ENCODE measurements at regions of chr18 and their contacts with region 1.

Region 1: DNA sequence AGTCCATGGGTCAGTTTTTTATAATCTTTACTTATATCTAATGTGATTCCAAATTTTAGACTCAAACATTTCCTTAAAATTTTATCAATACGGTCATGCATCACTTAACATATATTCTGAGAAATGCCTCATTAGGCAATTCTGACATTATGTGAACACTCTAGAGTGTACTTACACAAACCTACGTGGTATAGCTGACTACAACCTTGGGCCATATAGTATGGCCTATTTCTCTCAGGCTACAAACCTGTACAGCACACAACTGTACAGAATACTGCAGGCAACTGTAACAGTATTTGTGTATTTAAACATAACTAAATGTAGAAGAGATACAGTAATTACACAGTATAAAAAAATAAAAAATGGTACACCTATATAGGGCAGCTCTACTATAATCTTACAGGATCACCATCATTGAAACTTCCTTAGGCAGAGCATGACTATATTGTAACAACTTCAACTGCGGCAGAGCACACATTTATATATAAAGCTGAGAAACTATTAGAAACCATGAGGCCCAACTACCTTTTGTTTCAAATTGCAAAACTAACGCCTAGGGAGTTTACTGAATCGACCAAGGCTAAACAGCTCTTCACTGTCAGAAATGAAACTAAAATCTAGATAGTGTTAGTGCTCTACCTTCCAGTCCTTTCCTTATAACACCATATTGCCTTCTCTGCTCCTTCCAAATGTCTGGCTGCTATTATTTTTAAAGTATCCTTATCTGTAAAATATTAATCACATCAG is 6.9 kb downstream of the YES1 start:
- DNase-seq: peak in 2 of 9 experiments; percentile 11 to 30
- ATAC-seq: no peak
- H3K4me3 ChIP-seq: peak overlapping the region; percentile 8 to 9
- H3K4me3 Mint-ChIP-seq: peak overlapping the region; percentile 76
- H3K27ac ChIP-seq: peak overlapping the region in 1 of 2 experiments; percentile 34
- H3K27ac Mint-ChIP-seq: peak overlapping the region; percentile 45
- H3K4me1 ChIP-seq: peaks cover 58% of the 10 kb centered on the region
- H3K4me1 Mint-ChIP-seq: peaks cover 72% of the 10 kb centered on the region
- H3K27me3 ChIP-seq: no peaks in the 10 kb centered on the region
- H3K27me3 Mint-ChIP-seq: no peaks in the 10 kb centered on the region
- CTCF ChIP-seq: no peak

Region 2: DNA sequence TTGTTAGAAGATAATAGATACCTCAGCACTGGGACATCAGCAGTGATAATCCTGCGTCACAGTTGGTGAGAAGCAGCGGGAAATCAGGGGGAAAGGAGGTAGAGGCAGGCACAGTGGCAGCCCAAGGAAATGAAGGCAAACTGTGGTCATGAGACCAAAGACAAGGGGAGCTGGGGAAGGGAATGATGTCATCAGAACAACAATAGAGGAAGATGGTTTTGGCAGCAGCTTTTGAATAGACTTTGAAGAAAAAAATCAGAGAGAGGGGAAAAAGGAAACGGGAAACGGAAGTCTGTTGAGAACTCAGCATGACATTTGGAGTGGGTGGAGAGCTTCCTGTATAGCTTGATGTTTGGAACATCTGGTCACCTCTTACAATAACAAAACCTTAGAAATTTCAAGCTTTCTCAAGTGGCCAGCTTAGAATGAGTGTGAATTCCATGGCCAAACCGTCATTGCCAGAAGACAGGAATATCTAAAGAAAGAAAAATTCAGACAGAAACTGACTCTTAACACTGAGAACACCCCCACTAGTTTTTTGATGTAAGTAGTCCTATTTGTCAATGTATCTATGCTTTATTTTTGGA is 25.2 kb after region 1 on chr18:
- CTCF ChIA-PET with region 1: interaction called, 17 read pairs
- POLR2A ChIA-PET with region 1: interaction called, 46 read pairs
- intact Hi-C with region 1: no loop called
- DNase-seq: peak in 6 of 9 experiments; percentile 19 to 85 (median 56)
- ATAC-seq: peak; percentile 81
- H3K4me3 ChIP-seq: peak overlapping the region in 1 of 2 experiments; percentile 22
- H3K4me3 Mint-ChIP-seq: peak overlapping the region; percentile 59
- H3K27ac ChIP-seq: peak overlapping the region; percentile 26 to 83
- H3K27ac Mint-ChIP-seq: peak overlapping the region; percentile 68
- H3K4me1 ChIP-seq: peaks cover 23% of the 10 kb centered on the region
- H3K4me1 Mint-ChIP-seq: peaks cover 26% of the 10 kb centered on the region
- H3K27me3 ChIP-seq: no peaks in the 10 kb centered on the region
- H3K27me3 Mint-ChIP-seq: no peaks in the 10 kb centered on the region
- CTCF ChIP-seq: no peak

Region 3: GRCh38 chr18:857986-858385 is 52.8 kb after region 1 on chr18:
- CTCF ChIA-PET with region 1: no interaction called
- POLR2A ChIA-PET with region 1: no interaction called
- intact Hi-C with region 1: no loop called
- DNase-seq: no peak
- ATAC-seq: no peak
- H3K4me3 ChIP-seq: no peak overlapping the region
- H3K4me3 Mint-ChIP-seq: no peak overlapping the region
- H3K27ac ChIP-seq: no peak overlapping the region
- H3K27ac Mint-ChIP-seq: no peak overlapping the region
- H3K4me1 ChIP-seq: no peaks in the 10 kb centered on the region
- H3K4me1 Mint-ChIP-seq: no peaks in the 10 kb centered on the region
- H3K27me3 ChIP-seq: no peaks in the 10 kb centered on the region
- H3K27me3 Mint-ChIP-seq: peaks cover 28% of the 10 kb centered on the region
- CTCF ChIP-seq: no peak